GM12878 (cell line): ENCODE measurements at regions of chr7 and their contacts with region 1.

Region 1: GRCh38 chr7:98771941-98772603 is 97.7 kb downstream of the TMEM130 start:
- DNase-seq: peak; percentile 71
- ATAC-seq: peak; percentile 73
- H3K4me3 ChIP-seq: peak overlapping the region; percentile 17; the same call in 1 of the 2 replicates
- H3K27ac ChIP-seq: peak overlapping the region; percentile 67
- H3K4me1 ChIP-seq: peaks cover 20% of the 10 kb centered on the region
- H3K27me3 ChIP-seq: no peaks in the 10 kb centered on the region
- CTCF ChIP-seq: no peak
- EP300 ChIP-seq: no peak
- POLR2A ChIP-seq: no peak
- RAD21 ChIP-seq: no peak; the same call in 1 of the 2 replicates

Region 2: DNA sequence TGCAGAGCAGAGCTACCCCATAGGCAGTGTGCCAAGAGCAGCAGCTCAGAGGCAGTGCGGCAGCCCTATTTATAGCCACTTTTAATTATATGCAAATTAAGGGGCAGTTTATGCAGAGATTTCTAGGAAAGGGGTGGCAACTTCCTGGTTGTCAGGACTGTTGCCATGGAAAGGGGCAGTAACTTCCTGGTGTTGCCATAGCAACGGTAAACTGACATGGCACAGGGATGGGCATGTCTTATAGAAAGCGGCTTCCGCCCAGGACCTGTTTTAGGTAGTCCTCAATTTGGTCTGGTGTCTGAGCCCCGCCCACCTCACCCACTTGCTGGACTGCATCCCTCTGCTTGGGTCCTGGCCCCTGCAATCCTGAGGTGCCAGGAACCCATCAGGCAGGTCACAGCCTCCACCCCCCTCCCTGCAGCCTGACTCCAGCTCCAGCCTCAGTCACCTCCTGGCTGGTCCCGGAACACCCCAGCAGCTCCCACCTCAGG is 18.0 kb before region 1 on chr7:
- CTCF ChIA-PET with region 1: no interaction called
- POLR2A ChIA-PET with region 1: no interaction called
- RAD21 ChIA-PET with region 1: no interaction called
- SMC1A ChIA-PET with region 1: no interaction called
- in situ Hi-C with region 1: no loop called
- intact Hi-C with region 1: no loop called
- DNase-seq: no peak
- ATAC-seq: no peak
- H3K4me3 ChIP-seq: no peak overlapping the region
- H3K27ac ChIP-seq: no peak overlapping the region
- H3K4me1 ChIP-seq: no peaks in the 10 kb centered on the region
- H3K27me3 ChIP-seq: no peaks in the 10 kb centered on the region
- CTCF ChIP-seq: no peak
- EP300 ChIP-seq: no peak
- POLR2A ChIP-seq: no peak
- RAD21 ChIP-seq: no peak

Region 3: GRCh38 chr7:98802088-98802780 is 30.2 kb after region 1 on chr7:
- CTCF ChIA-PET with region 1: no interaction called
- POLR2A ChIA-PET with region 1: no interaction called
- RAD21 ChIA-PET with region 1: interaction called, 4 read pairs
- SMC1A ChIA-PET with region 1: interaction called, 3 read pairs
- in situ Hi-C with region 1: no loop called
- intact Hi-C with region 1: loop called (anchors 1 kb)
- DNase-seq: peak; percentile 92
- ATAC-seq: peak; percentile 97
- H3K4me3 ChIP-seq: peak overlapping the region; percentile 28; the same call in 1 of the 2 replicates
- H3K27ac ChIP-seq: peak overlapping the region; percentile 92
- H3K4me1 ChIP-seq: peaks cover 19% of the 10 kb centered on the region
- H3K27me3 ChIP-seq: no peaks in the 10 kb centered on the region
- CTCF ChIP-seq: no peak
- EP300 ChIP-seq: peak; percentile 73 to 84
- POLR2A ChIP-seq: no peak
- RAD21 ChIP-seq: 0 out of 2 replicates have a peak, but pooled peaks have one; percentile 19

Region 4: GRCh38 chr7:99707096-99707495 is 935.0 kb after region 1 on chr7:
- CTCF ChIA-PET with region 1: no interaction called
- POLR2A ChIA-PET with region 1: no interaction called
- RAD21 ChIA-PET with region 1: no interaction called
- SMC1A ChIA-PET with region 1: no interaction called
- in situ Hi-C with region 1: no loop called
- intact Hi-C with region 1: no loop called
- DNase-seq: no peak
- ATAC-seq: no peak
- H3K4me3 ChIP-seq: no peak overlapping the region
- H3K27ac ChIP-seq: no peak overlapping the region
- H3K4me1 ChIP-seq: no peaks in the 10 kb centered on the region
- H3K27me3 ChIP-seq: no peaks in the 10 kb centered on the region
- CTCF ChIP-seq: no peak
- EP300 ChIP-seq: no peak
- POLR2A ChIP-seq: no peak
- RAD21 ChIP-seq: no peak